Activated T-helper 1 cell treated with anti-CD3 and anti-CD28 coated beads, Interleukin-12 subunit alpha, Interleukin-12 subunit beta, Interleukin-2, Interleukin-4 antibody, amounts not matched to agents 30 ng/mL and 10 ng/mL and 1 ng/mL, durations not matched to agents 14 hours and 24 hours and 36 hours (primary cell): ENCODE measurements at regions of chr12 and their contacts with region 1.

Region 1: DNA sequence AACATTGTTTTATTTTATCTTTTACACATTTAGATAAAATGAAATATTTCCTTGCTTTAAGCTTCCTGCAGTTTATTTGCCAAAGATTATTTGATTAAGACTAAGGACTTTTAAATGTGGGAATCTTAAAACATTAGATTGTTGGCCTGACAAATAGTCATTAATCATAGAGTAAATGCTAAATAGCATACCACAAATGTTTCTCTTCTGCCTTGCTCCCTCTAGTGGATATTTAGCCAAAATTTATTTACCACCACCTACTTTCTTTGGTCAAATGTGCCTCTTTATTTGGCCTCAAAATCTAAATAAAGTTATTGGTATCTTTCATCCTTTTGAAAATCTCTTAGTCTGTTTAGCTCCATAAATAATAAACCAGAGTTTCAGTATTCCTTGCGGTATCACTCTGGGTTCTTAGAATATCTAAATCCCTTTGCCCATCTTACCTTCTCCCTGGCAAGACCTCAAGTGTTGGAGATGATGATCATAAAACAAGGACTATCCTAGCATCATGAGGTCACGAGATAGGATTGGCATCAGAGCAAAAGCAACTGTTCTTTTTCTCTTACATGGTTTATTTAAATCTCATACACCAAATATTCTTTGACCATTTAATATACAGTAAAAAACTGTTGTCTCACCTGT is 150.6 kb upstream of the AEBP2 start:
- DNase-seq: no peak
- H3K4me3 Mint-ChIP-seq: no peak overlapping the region
- H3K27ac Mint-ChIP-seq: no peak overlapping the region
- H3K4me1 Mint-ChIP-seq: no peaks in the 10 kb centered on the region
- H3K27me3 Mint-ChIP-seq: peaks cover 2% of the 10 kb centered on the region

Region 2: GRCh38 chr12:19439059-19440018 is 150.6 kb after region 1 on chr12 and contains the start of gene AEBP2:
- intact Hi-C with region 1: loop called (anchors 10 kb)
- DNase-seq: peak; percentile 90
- H3K4me3 Mint-ChIP-seq: peak within 1 kb of the TSS; percentile 98
- H3K27ac Mint-ChIP-seq: peak within 1 kb of the TSS; percentile 99
- H3K4me1 Mint-ChIP-seq: peaks cover 57% of the 10 kb centered on the region
- H3K27me3 Mint-ChIP-seq: peaks cover 2% of the 10 kb centered on the region
- total RNA-seq, gene AEBP2: 53.9 and 58.1 TPM in 2 replicates